Activated naive CD4-positive, alpha-beta T cell treated with anti-CD3 and anti-CD28 coated beads for 36 hours (primary cell): ENCODE measurements at regions of chr19 and their contacts with region 1.

Region 1: GRCh38 chr19:3665681-3666544 is 34.4 kb downstream of the PIP5K1C start:
- DNase-seq: peak; percentile 80
- H3K4me3 Mint-ChIP-seq: no peak overlapping the region
- H3K27ac Mint-ChIP-seq: no peak overlapping the region
- H3K4me1 Mint-ChIP-seq: peaks cover 5% of the 10 kb centered on the region
- H3K27me3 Mint-ChIP-seq: no peaks in the 10 kb centered on the region

Region 2: GRCh38 chr19:3710265-3710812 is 44.4 kb after region 1 on chr19:
- CTCF ChIA-PET with region 1: interaction called, 15 read pairs
- intact Hi-C with region 1: loop called (anchors 1 kb)
- DNase-seq: no peak
- H3K4me3 Mint-ChIP-seq: no peak overlapping the region
- H3K27ac Mint-ChIP-seq: no peak overlapping the region
- H3K4me1 Mint-ChIP-seq: peaks cover 2% of the 10 kb centered on the region
- H3K27me3 Mint-ChIP-seq: peaks cover 2% of the 10 kb centered on the region